GM12878 (cell line): ENCODE measurements at regions of chrX and their contacts with region 1.

Region 1: GRCh38 chrX:123267220-123267619 is 83.1 kb downstream of the GRIA3 start:
- DNase-seq: no peak
- ATAC-seq: no peak
- H3K4me3 ChIP-seq: no peak overlapping the region
- H3K27ac ChIP-seq: no peak overlapping the region
- H3K4me1 ChIP-seq: no peaks in the 10 kb centered on the region
- H3K27me3 ChIP-seq: no peaks in the 10 kb centered on the region
- CTCF ChIP-seq: no peak
- EP300 ChIP-seq: no peak
- POLR2A ChIP-seq: no peak
- RAD21 ChIP-seq: no peak

Region 2: DNA sequence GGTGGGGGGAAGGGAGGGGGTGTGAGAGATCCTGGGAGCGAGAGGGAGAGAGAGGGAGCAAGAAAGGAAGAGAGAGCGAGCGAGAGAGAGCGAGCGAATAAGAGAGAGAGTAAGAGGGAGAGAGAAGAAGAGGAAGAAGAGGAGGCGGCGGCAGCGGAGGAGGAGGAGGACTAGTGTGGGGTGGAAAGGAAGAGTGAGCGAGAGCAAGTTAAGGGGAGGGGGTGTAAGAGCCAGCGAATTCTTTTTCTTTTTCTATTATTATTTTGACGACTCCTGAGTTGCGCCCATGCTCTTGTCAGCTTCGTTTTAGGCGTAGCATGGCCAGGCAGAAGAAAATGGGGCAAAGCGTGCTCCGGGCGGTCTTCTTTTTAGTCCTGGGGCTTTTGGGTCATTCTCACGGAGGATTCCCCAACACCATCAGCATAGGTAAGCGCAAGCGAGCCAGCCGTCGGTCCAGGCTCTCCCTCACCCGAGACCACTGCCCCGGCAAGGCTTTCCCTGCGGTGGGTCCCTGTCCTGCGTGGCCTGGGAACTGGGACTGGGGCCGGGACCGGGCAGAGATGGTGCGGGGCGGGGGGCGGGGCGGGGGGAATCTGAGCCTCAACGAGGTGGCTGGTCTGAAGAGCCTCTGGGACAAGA is 82.9 kb before region 1 on chrX and contains the start of gene GRIA3:
- CTCF ChIA-PET with region 1: no interaction called
- POLR2A ChIA-PET with region 1: no interaction called
- RAD21 ChIA-PET with region 1: no interaction called
- SMC1A ChIA-PET with region 1: no interaction called
- in situ Hi-C with region 1: no loop called
- intact Hi-C with region 1: no loop called
- DNase-seq: no peak
- ATAC-seq: no peak
- H3K4me3 ChIP-seq: no peak within 1 kb of the TSS
- H3K27ac ChIP-seq: no peak within 1 kb of the TSS
- H3K4me1 ChIP-seq: no peaks in the 10 kb centered on the region
- H3K27me3 ChIP-seq: no peaks in the 10 kb centered on the region
- CTCF ChIP-seq: no peak
- EP300 ChIP-seq: no peak
- POLR2A ChIP-seq: no peak
- RAD21 ChIP-seq: no peak
- polyA plus RNA-seq, gene GRIA3: 2.2 to 4.3 TPM

Region 3: GRCh38 chrX:123256378-123256777 is 10.8 kb before region 1 on chrX:
- CTCF ChIA-PET with region 1: interaction called, 5 read pairs
- POLR2A ChIA-PET with region 1: no interaction called
- RAD21 ChIA-PET with region 1: interaction called, 3 read pairs
- SMC1A ChIA-PET with region 1: interaction called, 12 read pairs
- in situ Hi-C with region 1: no loop called
- intact Hi-C with region 1: no loop called
- DNase-seq: peak; percentile 24
- ATAC-seq: peak; percentile 90
- H3K4me3 ChIP-seq: no peak overlapping the region
- H3K27ac ChIP-seq: no peak overlapping the region
- H3K4me1 ChIP-seq: no peaks in the 10 kb centered on the region
- H3K27me3 ChIP-seq: no peaks in the 10 kb centered on the region
- CTCF ChIP-seq: no peak
- EP300 ChIP-seq: no peak
- POLR2A ChIP-seq: no peak
- RAD21 ChIP-seq: no peak

Region 4: DNA sequence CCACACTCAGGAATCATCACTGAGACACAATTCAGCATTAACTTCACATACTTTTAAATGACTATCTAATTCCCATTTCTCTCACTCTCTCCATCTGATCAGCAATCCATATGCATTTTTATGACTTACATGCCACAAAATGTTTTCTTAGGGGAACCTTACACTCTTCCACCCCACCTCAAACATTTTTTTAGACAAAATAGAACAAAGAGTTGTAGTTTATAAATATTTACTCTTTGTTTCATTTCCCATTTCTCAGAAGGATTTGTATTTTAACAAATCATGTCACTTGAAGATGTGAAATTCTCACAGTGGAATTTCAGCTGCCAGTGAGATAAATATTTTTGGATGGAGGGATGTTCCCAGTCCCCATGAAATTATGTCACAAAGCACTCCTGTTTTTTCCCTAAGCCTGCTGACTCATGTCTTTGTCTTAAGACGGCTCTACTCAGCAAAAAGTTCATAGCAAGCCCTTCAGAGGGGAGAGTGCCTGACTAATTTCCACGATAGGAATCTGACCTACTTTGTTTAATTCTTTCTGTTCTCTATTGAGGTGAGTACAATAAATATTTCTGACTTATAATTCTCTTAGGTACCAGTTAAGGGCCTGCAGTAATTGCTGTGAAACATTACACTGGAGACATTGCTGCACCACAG is 208.0 kb after region 1 on chrX:
- CTCF ChIA-PET with region 1: no interaction called
- POLR2A ChIA-PET with region 1: no interaction called
- RAD21 ChIA-PET with region 1: no interaction called
- SMC1A ChIA-PET with region 1: no interaction called
- in situ Hi-C with region 1: no loop called
- intact Hi-C with region 1: no loop called
- DNase-seq: no peak
- ATAC-seq: no peak; the same call in 1 of the 3 replicates
- H3K4me3 ChIP-seq: no peak overlapping the region
- H3K27ac ChIP-seq: no peak overlapping the region; the same call in 1 of the 2 replicates
- H3K4me1 ChIP-seq: no peaks in the 10 kb centered on the region
- H3K27me3 ChIP-seq: no peaks in the 10 kb centered on the region
- CTCF ChIP-seq: no peak
- EP300 ChIP-seq: no peak
- POLR2A ChIP-seq: no peak
- RAD21 ChIP-seq: no peak